CD8-positive, alpha-beta T cell (primary cell): ENCODE measurements at regions of chr4 and their contacts with region 1.

Region 1: GRCh38 chr4:87375719-87376291 is 15.2 kb downstream of the HSD17B11 start:
- DNase-seq: peak in 2 of 9 experiments; percentile 51 to 66
- ATAC-seq: peak; percentile 63
- H3K4me3 ChIP-seq: no peak overlapping the region
- H3K4me3 Mint-ChIP-seq: no peak overlapping the region
- H3K27ac ChIP-seq: no peak overlapping the region
- H3K27ac Mint-ChIP-seq: no peak overlapping the region
- H3K4me1 ChIP-seq: no peaks in the 10 kb centered on the region
- H3K4me1 Mint-ChIP-seq: peaks cover 5% of the 10 kb centered on the region
- H3K27me3 ChIP-seq: no peaks in the 10 kb centered on the region
- H3K27me3 Mint-ChIP-seq: no peaks in the 10 kb centered on the region
- CTCF ChIP-seq: peak; percentile 76

Region 2: GRCh38 chr4:87363567-87363966 is 12.2 kb before region 1 on chr4:
- CTCF ChIA-PET with region 1: interaction called, 13 read pairs
- POLR2A ChIA-PET with region 1: no interaction called
- intact Hi-C with region 1: no loop called
- DNase-seq: no peak
- ATAC-seq: no peak
- H3K4me3 ChIP-seq: no peak overlapping the region
- H3K4me3 Mint-ChIP-seq: no peak overlapping the region
- H3K27ac ChIP-seq: no peak overlapping the region
- H3K27ac Mint-ChIP-seq: peak overlapping the region; percentile 22
- H3K4me1 ChIP-seq: no peaks in the 10 kb centered on the region
- H3K4me1 Mint-ChIP-seq: peaks cover 3% of the 10 kb centered on the region
- H3K27me3 ChIP-seq: no peaks in the 10 kb centered on the region
- H3K27me3 Mint-ChIP-seq: no peaks in the 10 kb centered on the region
- CTCF ChIP-seq: no peak

Region 3: DNA sequence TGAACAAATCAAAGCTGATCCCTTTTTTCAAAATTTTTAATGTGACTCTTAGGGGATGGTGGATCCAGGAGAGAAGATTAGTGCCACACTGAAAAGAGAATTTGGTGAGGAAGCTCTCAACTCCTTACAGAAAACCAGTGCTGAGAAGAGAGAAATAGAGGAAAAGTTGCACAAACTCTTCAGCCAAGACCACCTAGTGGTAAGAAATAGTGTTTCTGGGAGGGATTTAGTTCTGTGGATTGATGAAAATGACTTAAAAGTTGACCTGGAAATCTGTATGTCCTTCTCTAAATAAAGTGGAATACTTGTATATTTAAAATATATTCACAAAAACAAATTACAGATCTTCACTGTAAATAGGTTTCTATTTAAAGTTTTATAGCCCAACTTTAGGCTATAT is 75.7 kb after region 1 on chr4:
- CTCF ChIA-PET with region 1: interaction called, 25 read pairs
- POLR2A ChIA-PET with region 1: no interaction called
- intact Hi-C with region 1: no loop called
- DNase-seq: peak in 1 of 9 experiments; percentile 7
- ATAC-seq: no peak
- H3K4me3 ChIP-seq: no peak overlapping the region
- H3K4me3 Mint-ChIP-seq: no peak overlapping the region
- H3K27ac ChIP-seq: no peak overlapping the region
- H3K27ac Mint-ChIP-seq: no peak overlapping the region
- H3K4me1 ChIP-seq: no peaks in the 10 kb centered on the region
- H3K4me1 Mint-ChIP-seq: no peaks in the 10 kb centered on the region
- H3K27me3 ChIP-seq: no peaks in the 10 kb centered on the region
- H3K27me3 Mint-ChIP-seq: no peaks in the 10 kb centered on the region
- CTCF ChIP-seq: no peak

Region 4: DNA sequence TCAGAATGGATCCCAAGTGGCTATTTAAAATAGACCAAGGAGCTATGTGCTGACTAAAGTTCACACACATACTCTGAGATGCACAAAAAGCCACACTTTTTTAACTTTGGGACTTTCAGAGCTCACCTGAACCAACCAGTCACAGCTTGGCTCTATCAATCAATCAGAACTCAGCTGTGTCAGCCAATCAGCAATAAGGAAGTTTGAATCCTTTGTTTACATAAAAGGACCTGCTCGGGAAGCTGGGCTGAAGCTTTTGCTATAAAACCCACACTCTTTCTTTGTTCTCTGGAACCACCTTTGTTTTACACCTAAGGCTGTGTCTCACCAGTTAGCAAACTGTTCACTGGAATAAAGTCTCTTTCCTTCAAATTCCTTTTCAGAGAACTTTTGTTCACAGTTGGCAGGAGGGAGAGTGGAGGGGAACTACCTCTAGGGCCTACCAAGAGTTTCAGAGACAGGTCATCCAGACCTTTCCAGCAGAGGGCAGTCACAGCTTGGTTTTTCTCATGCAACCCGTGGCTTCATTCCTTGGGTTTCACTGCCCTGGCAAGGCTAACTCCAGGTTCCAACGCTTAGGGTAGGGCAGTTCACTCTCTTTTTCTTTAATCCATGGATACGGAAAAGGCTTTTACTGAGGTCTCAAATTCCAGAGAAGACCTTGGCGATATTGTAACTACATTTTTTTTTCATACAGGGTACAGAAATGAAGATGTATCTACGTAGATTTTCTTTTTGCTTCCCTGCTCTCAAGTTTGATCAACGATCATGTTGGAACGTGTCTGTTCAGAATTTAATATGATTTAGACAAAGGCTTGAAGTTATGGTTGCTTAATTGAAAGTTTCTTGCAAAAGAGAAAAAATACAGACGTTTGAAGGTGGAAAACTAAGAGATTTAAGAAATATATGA is 1851.1 kb after region 1 on chr4:
- CTCF ChIA-PET with region 1: no interaction called
- POLR2A ChIA-PET with region 1: no interaction called
- intact Hi-C with region 1: no loop called
- DNase-seq: peak; percentile 55 to 86 (median 77)
- ATAC-seq: peak; percentile 94
- H3K4me3 ChIP-seq: no peak overlapping the region
- H3K4me3 Mint-ChIP-seq: peak overlapping the region; percentile 70
- H3K27ac ChIP-seq: no peak overlapping the region
- H3K27ac Mint-ChIP-seq: no peak overlapping the region
- H3K4me1 ChIP-seq: no peaks in the 10 kb centered on the region
- H3K4me1 Mint-ChIP-seq: peaks cover 2% of the 10 kb centered on the region
- H3K27me3 ChIP-seq: no peaks in the 10 kb centered on the region
- H3K27me3 Mint-ChIP-seq: peaks cover 2% of the 10 kb centered on the region
- CTCF ChIP-seq: peak; percentile 82